K562 (cell line): ENCODE measurements at regions of chr19 and their contacts with region 1.

Region 1: GRCh38 chr19:16649734-16650133 is 10.2 kb downstream of the SMIM7 start:
- DNase-seq: no peak
- ATAC-seq: no peak
- H3K4me3 ChIP-seq: no peak overlapping the region
- H3K27ac ChIP-seq: no peak overlapping the region
- H3K4me1 ChIP-seq: no peaks in the 10 kb centered on the region
- H3K27me3 ChIP-seq: no peaks in the 10 kb centered on the region
- CTCF ChIP-seq: no peak
- EP300 ChIP-seq: no peak
- POLR2A ChIP-seq: no peak; the same call in 1 of the 2 replicates
- RAD21 ChIP-seq: no peak

Region 2: DNA sequence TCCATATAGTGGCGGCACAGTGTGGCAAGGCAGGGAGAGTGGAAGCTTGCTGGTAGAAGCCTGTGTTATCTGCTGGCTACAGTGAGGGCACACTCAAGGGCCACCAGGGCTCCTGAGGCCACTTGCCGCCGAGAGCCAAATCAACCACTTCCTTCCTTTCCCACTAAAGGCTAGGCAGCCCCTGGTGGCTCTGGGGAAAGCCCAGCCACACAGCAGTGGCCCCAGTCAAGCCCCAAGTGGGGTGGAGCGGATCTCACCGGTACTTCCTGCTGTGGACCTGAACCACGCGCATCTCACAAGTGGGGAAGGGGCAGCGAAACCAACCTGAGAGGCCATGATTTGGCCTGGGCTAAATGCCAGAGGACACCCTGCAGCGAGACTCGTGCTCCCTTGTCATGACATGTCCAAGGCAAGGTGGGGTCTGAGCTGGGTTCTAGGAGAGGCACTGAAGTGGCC is 55.6 kb before region 1 on chr19:
- CTCF ChIA-PET with region 1: no interaction called
- POLR2A ChIA-PET with region 1: no interaction called
- in situ Hi-C with region 1: no loop called
- intact Hi-C with region 1: no loop called
- DNase-seq: no peak
- ATAC-seq: no peak
- H3K4me3 ChIP-seq: no peak overlapping the region
- H3K27ac ChIP-seq: no peak overlapping the region
- H3K4me1 ChIP-seq: peaks cover 11 to 28% of the 10 kb centered on the region in 2 experiments
- H3K27me3 ChIP-seq: no peaks in the 10 kb centered on the region
- CTCF ChIP-seq: no peak
- EP300 ChIP-seq: no peak
- POLR2A ChIP-seq: no peak
- RAD21 ChIP-seq: no peak

Region 3: DNA sequence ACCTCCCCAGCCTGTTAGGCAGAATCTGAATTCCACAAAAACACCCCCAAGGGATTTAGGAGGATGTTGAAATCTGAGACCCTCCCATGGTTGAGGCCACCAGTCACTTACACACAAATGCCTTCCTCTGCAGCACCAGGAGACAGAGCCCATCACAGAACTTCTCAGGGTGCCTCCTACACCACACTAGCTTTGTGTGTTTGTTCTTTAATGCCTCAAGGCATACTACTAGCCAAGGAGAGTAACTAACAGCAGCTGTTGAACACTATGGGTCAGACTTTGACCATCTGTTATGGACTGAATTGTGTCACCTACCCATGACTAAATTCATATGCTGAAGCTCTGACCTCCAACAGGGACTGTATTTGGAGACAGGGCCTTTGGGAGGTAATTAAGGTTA is 12.2 kb before region 1 on chr19:
- CTCF ChIA-PET with region 1: no interaction called
- POLR2A ChIA-PET with region 1: interaction called, 31 read pairs
- in situ Hi-C with region 1: no loop called
- intact Hi-C with region 1: no loop called
- DNase-seq: no peak
- ATAC-seq: no peak
- H3K4me3 ChIP-seq: no peak overlapping the region
- H3K27ac ChIP-seq: no peak overlapping the region
- H3K4me1 ChIP-seq: no peaks in the 10 kb centered on the region; a peak in 1 of 5 replicates
- H3K27me3 ChIP-seq: no peaks in the 10 kb centered on the region
- CTCF ChIP-seq: no peak
- EP300 ChIP-seq: no peak
- POLR2A ChIP-seq: no peak
- RAD21 ChIP-seq: no peak